ENCODE measurements at regions of chr3 and their contacts with region 1.

Region 1: GRCh38 chr3:71389911-71390573 is 193.5 kb downstream of the FOXP1 start:
- DNase-seq: peak; percentile 20
- H3K4me3 Mint-ChIP-seq: peak overlapping the region; percentile 62
- H3K27ac Mint-ChIP-seq: peak overlapping the region; percentile 81
- H3K4me1 Mint-ChIP-seq: peaks cover 55% of the 10 kb centered on the region
- H3K27me3 Mint-ChIP-seq: no peaks in the 10 kb centered on the region

Region 2: DNA sequence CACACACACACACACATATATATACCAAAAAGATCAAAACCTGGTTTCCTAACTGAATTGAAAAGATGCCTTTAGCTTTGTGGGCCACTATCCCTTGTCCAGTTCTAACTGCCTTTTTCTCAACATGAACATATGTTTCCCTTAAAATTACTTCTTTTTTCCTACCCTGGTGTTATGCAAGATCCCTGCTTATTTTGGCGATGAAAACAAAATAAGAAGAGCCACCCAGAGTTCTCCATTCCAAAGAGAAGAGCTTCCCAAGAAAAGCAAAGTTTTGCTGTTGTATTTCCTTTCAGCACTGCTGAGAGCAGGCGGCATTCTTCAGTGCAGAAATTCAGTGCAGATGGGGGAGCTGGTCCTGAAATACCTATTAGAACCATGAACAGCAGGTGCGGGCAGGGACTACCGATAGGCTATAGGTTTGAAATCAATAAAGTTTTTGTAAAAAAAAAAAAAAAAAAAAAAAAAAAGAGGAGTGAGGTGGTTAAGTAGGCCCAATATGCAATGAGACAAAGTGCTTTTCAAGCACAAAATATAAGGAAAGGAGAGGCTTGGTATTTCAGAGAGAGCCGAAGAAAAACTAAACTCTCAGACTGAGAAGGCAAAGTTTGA is 44.5 kb before region 1 on chr3:
- intact Hi-C with region 1: no loop called
- DNase-seq: no peak
- H3K4me3 Mint-ChIP-seq: no peak overlapping the region
- H3K27ac Mint-ChIP-seq: no peak overlapping the region
- H3K4me1 Mint-ChIP-seq: peaks cover 19% of the 10 kb centered on the region
- H3K27me3 Mint-ChIP-seq: no peaks in the 10 kb centered on the region

Region 3: DNA sequence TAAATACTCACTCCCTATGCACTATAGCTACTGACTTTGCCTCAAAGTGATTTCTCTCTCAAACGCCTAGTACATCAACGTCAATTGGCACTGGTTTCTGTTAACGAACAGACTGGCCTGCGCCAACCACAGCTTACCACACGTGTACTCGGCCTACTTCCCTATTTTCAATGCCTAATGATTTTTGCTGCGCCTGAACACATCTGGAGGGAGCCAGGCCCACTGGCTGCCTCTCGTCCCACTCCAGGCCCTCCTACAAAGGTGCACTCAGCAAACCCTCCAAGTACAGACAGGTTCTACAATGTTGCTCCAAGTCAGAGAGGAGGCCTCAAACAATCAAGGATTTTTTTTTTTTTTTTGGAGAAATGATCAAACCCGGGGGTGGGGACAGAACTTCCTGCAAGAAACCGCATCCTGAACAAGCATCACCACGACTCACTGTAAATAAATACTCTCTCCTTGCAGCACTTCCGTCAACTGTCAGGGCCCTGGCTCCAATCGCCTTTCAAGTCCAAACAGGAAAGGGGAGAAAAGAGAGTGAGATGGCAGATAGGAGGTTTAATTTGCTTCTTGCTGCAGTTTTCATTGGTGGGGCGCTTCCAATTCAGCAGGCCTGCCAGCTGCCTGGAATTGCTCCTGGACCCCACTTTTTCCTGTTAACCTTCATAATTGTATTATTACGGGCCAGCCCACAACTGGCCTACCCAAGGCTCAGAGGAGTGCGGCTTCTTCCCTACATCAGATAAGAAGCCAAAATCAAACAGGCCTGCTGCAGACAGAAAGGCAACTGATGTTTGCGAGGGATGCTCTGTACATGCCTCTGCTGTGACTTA is 54.2 kb after region 1 on chr3:
- intact Hi-C with region 1: loop called (anchors 1 kb)
- DNase-seq: peak; percentile 79
- H3K4me3 Mint-ChIP-seq: peak overlapping the region; percentile 71
- H3K27ac Mint-ChIP-seq: peak overlapping the region; percentile 99
- H3K4me1 Mint-ChIP-seq: peaks cover 86% of the 10 kb centered on the region
- H3K27me3 Mint-ChIP-seq: no peaks in the 10 kb centered on the region

Measured in activated T-helper 2 cell treated with anti-CD3 and anti-CD28 coated beads, Interferon-gamma antibody, Interleukin-2, Interleukin-4, amounts not matched to agents 10 μg/mL and 5 μg/mL and 100 μg/mL, durations not matched to agents 14 hours and 24 hours and 36 hours (primary cell).